AG04449 (cell line): ENCODE measurements at regions of chr1 and their contacts with region 1.

Region 1: GRCh38 chr1:154479764-154480421 is 22.1 kb upstream of the TDRD10 start:
- DNase-seq: no peak
- H3K4me3 ChIP-seq: no peak overlapping the region
- CTCF ChIP-seq: peak; percentile 79

Region 2: GRCh38 chr1:154463512-154463990 is 16.3 kb before region 1 on chr1:
- CTCF ChIA-PET with region 1: interaction called, 24 read pairs
- POLR2A ChIA-PET with region 1: no interaction called
- DNase-seq: no peak
- H3K4me3 ChIP-seq: no peak overlapping the region
- CTCF ChIP-seq: no peak

Region 3: GRCh38 chr1:154493276-154493675 is 13.4 kb after region 1 on chr1:
- CTCF ChIA-PET with region 1: interaction called, 42 read pairs
- POLR2A ChIA-PET with region 1: no interaction called
- DNase-seq: no peak
- H3K4me3 ChIP-seq: no peak overlapping the region
- CTCF ChIP-seq: no peak

Region 4: GRCh38 chr1:154501423-154502065 is 21.7 kb after region 1 on chr1:
- CTCF ChIA-PET with region 1: interaction called, 21 read pairs
- POLR2A ChIA-PET with region 1: no interaction called
- DNase-seq: no peak
- H3K4me3 ChIP-seq: no peak overlapping the region
- CTCF ChIP-seq: no peak

Region 5: DNA sequence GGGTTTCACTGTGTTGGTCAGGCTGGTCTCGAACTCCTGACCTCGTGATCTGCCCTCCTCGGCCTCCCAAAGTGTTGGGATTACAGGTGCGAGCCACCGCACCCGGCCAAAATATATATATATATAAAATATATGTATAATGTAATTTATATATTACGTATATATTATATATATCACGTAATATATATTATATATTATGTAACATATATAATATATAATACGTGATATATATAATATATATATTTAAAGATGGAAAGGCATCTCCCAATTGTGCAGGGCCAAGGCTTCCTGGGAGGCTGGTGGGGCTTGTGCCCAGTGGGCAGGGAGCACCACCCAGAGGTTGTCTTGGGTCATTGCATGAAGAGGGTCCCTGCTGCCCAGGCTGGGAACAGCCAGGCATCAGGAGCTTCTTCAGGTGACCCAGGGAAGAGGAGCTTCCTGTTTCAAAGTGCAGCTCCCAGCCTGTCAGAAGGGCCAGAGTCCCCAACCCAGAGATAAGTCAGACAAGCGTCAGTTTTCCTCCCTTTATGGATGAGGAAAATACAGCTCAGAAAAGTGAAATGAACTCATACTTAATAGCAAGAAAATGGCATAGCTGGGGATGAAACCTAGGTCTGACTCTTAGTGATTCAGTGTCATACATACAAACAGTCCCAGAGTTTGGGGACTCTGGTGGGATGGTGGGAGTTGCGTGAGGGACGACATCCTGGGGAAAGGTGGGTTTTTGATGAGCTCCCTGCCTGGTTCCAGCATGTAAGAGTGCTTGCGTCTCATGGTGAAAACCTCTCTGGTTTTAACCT is 66.6 kb after region 1 on chr1:
- CTCF ChIA-PET with region 1: interaction called, 118 read pairs
- POLR2A ChIA-PET with region 1: interaction called, 3 read pairs
- DNase-seq: no peak
- H3K4me3 ChIP-seq: no peak overlapping the region
- CTCF ChIP-seq: peak; percentile 85

Region 6: DNA sequence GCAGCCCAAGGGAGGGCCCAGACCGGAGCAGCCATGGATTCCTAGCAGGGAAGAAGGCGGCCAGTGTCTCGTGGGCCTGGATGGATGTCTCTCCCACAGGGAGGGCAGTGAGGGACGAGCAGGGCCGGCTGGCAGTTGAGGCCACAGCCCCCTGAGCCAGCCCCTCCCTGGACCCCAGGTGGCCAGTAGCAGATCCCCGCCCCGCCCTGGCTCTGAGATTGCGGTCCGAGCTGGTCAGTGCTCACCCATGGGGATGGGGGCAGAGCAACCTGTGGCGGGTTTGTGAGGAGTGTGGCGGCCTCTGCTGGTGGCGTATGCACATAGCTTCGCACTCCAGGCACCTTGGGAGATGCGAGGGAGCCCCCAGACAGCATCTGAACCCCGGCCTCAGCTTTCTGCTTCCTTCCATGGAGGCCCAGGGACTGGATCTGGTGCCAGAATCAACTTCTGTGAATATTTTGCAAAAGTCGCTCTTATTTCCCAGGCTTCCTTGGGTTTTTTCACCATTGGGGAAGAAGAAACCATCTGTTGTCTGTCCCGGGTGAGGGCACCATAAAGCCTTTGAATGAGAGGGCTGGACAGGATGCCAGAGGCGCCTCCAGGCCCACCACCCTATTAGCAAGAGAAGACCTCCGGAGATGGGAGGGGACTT is 398.6 kb after region 1 on chr1:
- CTCF ChIA-PET with region 1: interaction called, 16 read pairs
- POLR2A ChIA-PET with region 1: no interaction called
- DNase-seq: no peak
- H3K4me3 ChIP-seq: no peak overlapping the region
- CTCF ChIP-seq: peak; percentile 94